ENCODE measurements at regions of chr13 and their contacts with region 1.

Region 1: DNA sequence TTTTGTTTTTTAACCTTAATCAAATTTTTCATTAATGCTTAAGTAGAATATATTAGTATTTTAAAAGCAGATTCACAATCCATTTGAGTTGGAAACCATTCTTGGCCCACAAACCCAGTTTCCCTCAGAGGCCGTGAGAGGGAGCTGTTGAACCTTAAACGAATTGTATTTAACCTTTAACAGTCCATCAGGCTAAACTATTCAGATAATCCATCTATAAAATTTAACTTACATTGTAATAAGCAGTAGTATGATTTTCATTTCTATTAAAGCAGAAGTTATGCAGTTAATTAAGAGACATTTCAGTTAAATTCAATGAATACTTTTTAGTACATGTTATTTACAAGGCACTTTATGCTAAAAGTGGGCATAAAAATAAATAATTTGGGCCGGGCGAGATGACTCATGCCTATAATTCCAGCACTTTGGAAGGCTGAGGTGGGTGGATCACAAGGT is 123.1 kb upstream of the C1QTNF9B start:
- DNase-seq: no peak
- ATAC-seq: peak; percentile 82
- H3K4me3 ChIP-seq: no peak overlapping the region
- H3K27ac ChIP-seq: no peak overlapping the region
- H3K4me1 ChIP-seq: no peaks in the 10 kb centered on the region
- H3K27me3 ChIP-seq: no peaks in the 10 kb centered on the region
- CTCF ChIP-seq: peak; percentile 63 to 75 (median 65)
- EP300 ChIP-seq: no peak
- POLR2A ChIP-seq: no peak
- RAD21 ChIP-seq: peak; percentile 88

Region 2: GRCh38 chr13:23579072-23579895 is 441.1 kb before region 1 on chr13:
- CTCF ChIA-PET with region 1: no interaction called
- POLR2A ChIA-PET with region 1: no interaction called
- RAD21 ChIA-PET with region 1: no interaction called
- SMC1A ChIA-PET with region 1: no interaction called
- in situ Hi-C with region 1: no loop called
- intact Hi-C with region 1: no loop called
- DNase-seq: no peak
- ATAC-seq: peak; percentile 89
- H3K4me3 ChIP-seq: peak overlapping the region; percentile 86
- H3K27ac ChIP-seq: peak overlapping the region; percentile 92
- H3K4me1 ChIP-seq: peaks cover 17% of the 10 kb centered on the region
- H3K27me3 ChIP-seq: no peaks in the 10 kb centered on the region
- CTCF ChIP-seq: no peak
- EP300 ChIP-seq: no peak
- POLR2A ChIP-seq: peak; percentile 83
- RAD21 ChIP-seq: no peak

Region 3: DNA sequence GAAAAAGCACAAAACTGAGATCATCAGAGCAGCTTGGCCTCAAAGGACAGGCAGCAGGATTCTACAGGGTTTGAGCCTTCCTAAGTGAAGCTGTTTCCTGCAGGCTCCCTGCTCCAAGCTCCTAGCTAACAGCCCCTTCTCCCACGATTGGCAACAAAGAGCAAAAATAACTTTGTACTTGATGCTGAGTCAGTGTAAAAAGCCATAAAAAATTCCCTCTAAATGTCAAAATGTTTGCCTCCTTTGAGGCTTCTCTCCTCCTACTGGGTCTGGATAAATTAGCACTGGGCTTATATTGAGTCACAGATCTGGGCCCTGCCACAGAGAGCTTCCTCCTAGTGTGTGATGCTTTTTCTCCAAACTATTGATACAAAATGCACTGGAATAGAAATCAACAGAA is 296.9 kb before region 1 on chr13:
- CTCF ChIA-PET with region 1: no interaction called
- POLR2A ChIA-PET with region 1: no interaction called
- RAD21 ChIA-PET with region 1: no interaction called
- SMC1A ChIA-PET with region 1: no interaction called
- in situ Hi-C with region 1: no loop called
- intact Hi-C with region 1: no loop called
- DNase-seq: no peak
- ATAC-seq: no peak
- H3K4me3 ChIP-seq: no peak overlapping the region
- H3K27ac ChIP-seq: no peak overlapping the region
- H3K4me1 ChIP-seq: no peaks in the 10 kb centered on the region
- H3K27me3 ChIP-seq: no peaks in the 10 kb centered on the region
- CTCF ChIP-seq: no peak
- EP300 ChIP-seq: no peak
- POLR2A ChIP-seq: no peak
- RAD21 ChIP-seq: no peak

Region 4: GRCh38 chr13:23921451-23921888 is 98.9 kb before region 1 on chr13:
- CTCF ChIA-PET with region 1: interaction called, 28 read pairs
- POLR2A ChIA-PET with region 1: no interaction called
- RAD21 ChIA-PET with region 1: interaction called, 5 read pairs
- SMC1A ChIA-PET with region 1: interaction called, 6 read pairs
- in situ Hi-C with region 1: no loop called
- intact Hi-C with region 1: loop called (anchors 1 kb)
- DNase-seq: no peak
- ATAC-seq: peak; percentile 66
- H3K4me3 ChIP-seq: no peak overlapping the region
- H3K27ac ChIP-seq: no peak overlapping the region
- H3K4me1 ChIP-seq: no peaks in the 10 kb centered on the region
- H3K27me3 ChIP-seq: no peaks in the 10 kb centered on the region
- CTCF ChIP-seq: peak; percentile 57 to 72 (median 58)
- EP300 ChIP-seq: no peak
- POLR2A ChIP-seq: no peak
- RAD21 ChIP-seq: peak; percentile 84

Region 5: GRCh38 chr13:24005755-24006281 is 14.6 kb before region 1 on chr13:
- CTCF ChIA-PET with region 1: interaction called, 58 read pairs
- POLR2A ChIA-PET with region 1: no interaction called
- RAD21 ChIA-PET with region 1: interaction called, 5 read pairs
- SMC1A ChIA-PET with region 1: interaction called, 28 read pairs
- in situ Hi-C with region 1: no loop called
- intact Hi-C with region 1: no loop called
- DNase-seq: peak; percentile 19
- ATAC-seq: peak; percentile 95
- H3K4me3 ChIP-seq: no peak overlapping the region
- H3K27ac ChIP-seq: no peak overlapping the region
- H3K4me1 ChIP-seq: no peaks in the 10 kb centered on the region
- H3K27me3 ChIP-seq: no peaks in the 10 kb centered on the region
- CTCF ChIP-seq: no peak
- EP300 ChIP-seq: peak; percentile 14 to 57; a peak in 1 of 4 replicates
- POLR2A ChIP-seq: no peak
- RAD21 ChIP-seq: no peak

Region 6: GRCh38 chr13:24053519-24054251 is 33.3 kb after region 1 on chr13:
- CTCF ChIA-PET with region 1: interaction called, 27 read pairs
- POLR2A ChIA-PET with region 1: no interaction called
- RAD21 ChIA-PET with region 1: interaction called, 6 read pairs
- SMC1A ChIA-PET with region 1: interaction called, 6 read pairs
- in situ Hi-C with region 1: no loop called
- intact Hi-C with region 1: no loop called
- DNase-seq: peak; percentile 17
- ATAC-seq: peak; percentile 98
- H3K4me3 ChIP-seq: no peak overlapping the region
- H3K27ac ChIP-seq: no peak overlapping the region
- H3K4me1 ChIP-seq: no peaks in the 10 kb centered on the region
- H3K27me3 ChIP-seq: no peaks in the 10 kb centered on the region; a peak in 2 of 4 replicates
- CTCF ChIP-seq: peak; percentile 81 to 86 (median 82)
- EP300 ChIP-seq: no peak
- POLR2A ChIP-seq: no peak
- RAD21 ChIP-seq: peak; percentile 92

Region 7: DNA sequence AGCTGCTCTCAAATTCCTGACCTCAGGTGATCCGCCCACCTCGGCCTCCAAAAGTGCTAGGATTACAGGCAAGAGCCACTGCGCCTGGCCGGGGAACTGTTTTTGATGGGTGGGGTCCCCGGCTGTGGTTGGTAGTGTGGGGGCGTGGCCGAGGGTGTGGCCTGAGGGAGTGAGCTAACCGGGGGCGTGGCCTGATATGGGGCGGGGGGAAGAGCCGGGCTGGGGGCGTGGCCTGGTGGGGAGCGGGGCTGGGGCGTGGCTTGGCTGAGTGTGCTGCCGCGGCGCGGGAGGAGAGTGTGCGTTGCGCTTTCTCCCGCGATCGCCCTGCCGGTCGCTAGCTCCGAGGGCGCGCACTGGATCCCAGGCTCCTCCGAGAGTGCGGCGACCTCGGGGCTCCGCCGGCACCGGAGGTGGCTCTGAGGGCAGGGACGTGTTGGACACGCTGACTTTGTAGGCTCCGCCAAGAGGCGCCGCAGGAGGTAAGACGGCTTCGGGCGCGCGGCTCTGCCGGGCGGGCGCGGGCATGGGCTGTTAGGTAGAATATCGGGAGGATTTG is 140.1 kb after region 1 on chr13 and contains the start of gene SPATA13:
- CTCF ChIA-PET with region 1: no interaction called
- POLR2A ChIA-PET with region 1: no interaction called
- RAD21 ChIA-PET with region 1: no interaction called
- SMC1A ChIA-PET with region 1: no interaction called
- in situ Hi-C with region 1: no loop called
- intact Hi-C with region 1: no loop called
- DNase-seq: peak; percentile 26
- ATAC-seq: peak; percentile 98
- H3K4me3 ChIP-seq: peak within 1 kb of the TSS; percentile 71
- H3K27ac ChIP-seq: no peak within 1 kb of the TSS
- H3K4me1 ChIP-seq: no peaks in the 10 kb centered on the region; the same call in 1 of the 2 replicates
- H3K27me3 ChIP-seq: peaks cover 0 to 16% of the 10 kb centered on the region in 2 experiments; a peak in 2 of 4 replicates
- CTCF ChIP-seq: no peak
- EP300 ChIP-seq: no peak
- POLR2A ChIP-seq: peak; percentile 61; the same call in 1 of the 2 replicates
- RAD21 ChIP-seq: no peak
- polyA plus RNA-seq, gene SPATA13: 2.4 to 2.7 TPM

Region 8: DNA sequence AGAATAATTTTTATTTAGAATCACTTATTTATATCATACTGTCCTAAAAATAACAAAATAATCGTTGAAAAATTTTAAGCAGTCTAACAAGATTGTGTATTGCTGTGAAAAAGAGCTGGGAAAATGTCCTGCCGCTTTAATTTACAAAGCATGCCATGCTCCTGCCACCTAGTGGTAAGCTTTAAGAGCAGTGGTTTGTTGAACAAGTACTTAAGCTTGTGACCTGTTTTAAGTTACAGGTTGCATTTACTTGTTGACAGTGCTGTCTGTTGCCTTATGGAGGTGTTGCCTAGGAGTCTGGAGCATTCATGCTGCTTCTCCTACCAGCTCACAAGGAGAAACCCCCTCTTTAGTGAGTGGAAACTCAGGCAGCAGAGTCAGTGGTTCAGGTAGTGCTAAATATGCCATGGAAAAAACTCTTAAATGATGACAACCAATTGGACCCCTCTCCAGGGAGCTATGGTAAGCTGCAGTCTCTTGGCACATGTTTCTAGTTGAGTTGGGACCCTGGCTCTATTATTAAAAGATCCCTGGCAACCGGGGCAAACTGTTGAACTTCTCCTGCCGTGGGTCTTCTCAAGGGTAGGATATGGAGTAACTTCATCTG is 208.6 kb after region 1 on chr13:
- CTCF ChIA-PET with region 1: interaction called, 155 read pairs
- POLR2A ChIA-PET with region 1: no interaction called
- RAD21 ChIA-PET with region 1: interaction called, 7 read pairs
- SMC1A ChIA-PET with region 1: interaction called, 15 read pairs
- in situ Hi-C with region 1: loop called (anchors 5 kb)
- intact Hi-C with region 1: no loop called
- DNase-seq: no peak
- ATAC-seq: peak; percentile 70
- H3K4me3 ChIP-seq: no peak overlapping the region
- H3K27ac ChIP-seq: no peak overlapping the region
- H3K4me1 ChIP-seq: peaks cover 18% of the 10 kb centered on the region
- H3K27me3 ChIP-seq: no peaks in the 10 kb centered on the region
- CTCF ChIP-seq: peak; percentile 76 to 96 (median 87)
- EP300 ChIP-seq: no peak
- POLR2A ChIP-seq: no peak
- RAD21 ChIP-seq: peak; percentile 82

Region 9: GRCh38 chr13:24293746-24294145 is 273.3 kb after region 1 on chr13:
- CTCF ChIA-PET with region 1: no interaction called
- POLR2A ChIA-PET with region 1: no interaction called
- RAD21 ChIA-PET with region 1: no interaction called
- SMC1A ChIA-PET with region 1: no interaction called
- in situ Hi-C with region 1: no loop called
- intact Hi-C with region 1: no loop called
- DNase-seq: no peak
- ATAC-seq: no peak
- H3K4me3 ChIP-seq: no peak overlapping the region
- H3K27ac ChIP-seq: no peak overlapping the region
- H3K4me1 ChIP-seq: no peaks in the 10 kb centered on the region
- H3K27me3 ChIP-seq: no peaks in the 10 kb centered on the region
- CTCF ChIP-seq: no peak
- EP300 ChIP-seq: no peak
- POLR2A ChIP-seq: no peak
- RAD21 ChIP-seq: no peak